ENCODE measurements at regions of chr16 and their contacts with region 1.

Region 1: DNA sequence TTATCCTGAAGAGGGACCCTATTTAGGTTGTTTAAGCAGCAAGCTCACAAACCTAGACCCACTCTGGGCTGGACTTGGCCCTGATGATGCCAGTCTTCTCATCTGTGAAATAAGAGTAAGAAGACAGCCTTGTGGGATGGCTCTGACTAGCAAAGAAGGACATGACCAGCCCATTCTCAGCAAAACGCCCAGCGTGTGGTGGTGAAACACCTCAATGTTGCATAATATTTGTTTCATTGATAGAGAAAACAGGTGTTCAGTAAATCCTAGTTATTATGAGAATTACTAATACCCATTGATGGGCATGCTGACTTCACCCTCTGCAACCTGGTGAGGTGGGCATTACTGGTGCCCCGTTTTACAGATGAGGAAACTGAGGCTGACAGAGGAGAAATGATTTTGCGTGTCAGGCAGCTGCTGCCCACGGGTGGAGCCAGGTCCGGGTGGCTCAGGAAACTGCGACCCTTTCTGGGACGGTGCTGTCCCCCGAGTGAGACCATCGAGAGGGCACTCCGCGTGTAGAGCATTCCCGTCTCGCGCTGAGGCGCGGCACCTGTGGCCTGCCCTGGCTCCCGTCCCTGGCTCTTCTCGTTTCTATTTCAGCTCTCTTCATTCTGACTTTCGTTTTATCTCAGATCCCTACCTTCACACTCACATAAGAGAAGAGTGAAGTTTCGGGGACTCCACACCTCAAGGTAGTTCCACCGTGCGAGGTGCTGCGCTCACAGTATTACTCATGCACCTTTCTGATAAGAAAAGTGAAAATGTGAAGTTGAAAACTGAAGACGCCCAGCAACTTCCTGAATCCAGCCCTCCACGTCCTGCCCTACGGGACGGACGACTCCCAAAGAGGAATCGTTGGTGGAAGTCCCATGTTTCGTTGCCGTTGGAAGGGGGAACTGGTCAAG is 48.5 kb downstream of the IRF8 start:
- DNase-seq: peak; percentile 20
- H3K4me3 Mint-ChIP-seq: peak overlapping the region; percentile 40
- H3K27ac Mint-ChIP-seq: peak overlapping the region; percentile 59
- H3K4me1 Mint-ChIP-seq: peaks cover 58% of the 10 kb centered on the region
- H3K27me3 Mint-ChIP-seq: peaks cover 12% of the 10 kb centered on the region

Region 2: GRCh38 chr16:85888405-85889331 is 58.8 kb before region 1 on chr16:
- intact Hi-C with region 1: loop called (anchors 1 kb)
- DNase-seq: peak; percentile 18
- H3K4me3 Mint-ChIP-seq: peak overlapping the region; percentile 43
- H3K27ac Mint-ChIP-seq: peak overlapping the region; percentile 67
- H3K4me1 Mint-ChIP-seq: peaks cover 38% of the 10 kb centered on the region
- H3K27me3 Mint-ChIP-seq: peaks cover 21% of the 10 kb centered on the region

Region 3: GRCh38 chr16:85969159-85969558 is 21.7 kb after region 1 on chr16:
- intact Hi-C with region 1: loop called (anchors 2 kb)
- DNase-seq: no peak
- H3K4me3 Mint-ChIP-seq: no peak overlapping the region
- H3K27ac Mint-ChIP-seq: peak overlapping the region; percentile 18
- H3K4me1 Mint-ChIP-seq: peaks cover 37% of the 10 kb centered on the region
- H3K27me3 Mint-ChIP-seq: peaks cover 5% of the 10 kb centered on the region